Ovary (tissue), 10 donors: ENCODE measurements at regions of chrX and their contacts with region 1.

Region 1: DNA sequence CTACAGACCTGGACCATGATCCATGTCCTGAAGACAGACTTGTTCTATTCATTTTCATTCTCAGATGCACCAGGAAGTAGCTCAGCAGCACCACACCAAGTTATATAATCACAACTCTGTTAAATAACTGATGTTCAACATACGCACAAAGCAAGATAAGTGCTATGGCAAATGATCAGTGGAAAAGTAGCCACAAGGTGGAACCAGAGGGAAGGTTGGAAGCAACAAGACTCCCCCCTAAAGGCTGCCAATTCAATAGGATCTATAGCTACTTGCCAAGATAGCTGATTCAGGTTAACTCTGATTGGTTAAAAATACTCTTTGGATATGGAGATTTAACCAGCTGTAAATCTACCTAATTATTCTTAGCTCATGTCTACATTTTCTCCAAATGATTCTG is 23.7 kb upstream of the FAM47B start:
- DNase-seq: no peak
- H3K4me3 ChIP-seq: no peak overlapping the region
- H3K27ac ChIP-seq: no peak overlapping the region
- H3K4me1 ChIP-seq: no peaks in the 10 kb centered on the region
- H3K27me3 ChIP-seq: no peaks in the 10 kb centered on the region
- CTCF ChIP-seq: no peak
- EP300 ChIP-seq: no peak
- POLR2A ChIP-seq: no peak

Region 2: DNA sequence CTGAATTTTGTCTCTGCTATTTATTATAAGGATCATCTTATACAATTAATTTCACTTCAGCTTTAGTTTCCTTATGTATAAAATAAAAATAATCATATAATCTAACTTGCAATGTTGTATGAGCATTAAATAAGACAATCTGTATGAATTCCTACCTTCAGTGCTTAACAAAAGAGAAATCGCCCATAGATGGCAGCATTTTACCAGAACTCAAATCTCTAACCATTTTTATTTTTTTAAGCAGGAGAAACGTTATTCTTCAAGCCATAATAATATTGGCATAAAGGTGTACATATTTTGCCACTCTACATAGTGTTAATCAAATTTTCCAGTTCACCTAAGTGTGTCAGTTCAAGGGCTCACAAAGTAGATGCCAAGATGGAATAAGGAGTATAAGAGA is 340.6 kb before region 1 on chrX:
- intact Hi-C with region 1: loop called in 1 of 4 experiments (anchors 5 kb)
- DNase-seq: no peak
- H3K4me3 ChIP-seq: no peak overlapping the region
- H3K27ac ChIP-seq: no peak overlapping the region
- H3K4me1 ChIP-seq: no peaks in the 10 kb centered on the region
- H3K27me3 ChIP-seq: no peaks in the 10 kb centered on the region
- CTCF ChIP-seq: no peak
- EP300 ChIP-seq: no peak
- POLR2A ChIP-seq: no peak

Region 3: DNA sequence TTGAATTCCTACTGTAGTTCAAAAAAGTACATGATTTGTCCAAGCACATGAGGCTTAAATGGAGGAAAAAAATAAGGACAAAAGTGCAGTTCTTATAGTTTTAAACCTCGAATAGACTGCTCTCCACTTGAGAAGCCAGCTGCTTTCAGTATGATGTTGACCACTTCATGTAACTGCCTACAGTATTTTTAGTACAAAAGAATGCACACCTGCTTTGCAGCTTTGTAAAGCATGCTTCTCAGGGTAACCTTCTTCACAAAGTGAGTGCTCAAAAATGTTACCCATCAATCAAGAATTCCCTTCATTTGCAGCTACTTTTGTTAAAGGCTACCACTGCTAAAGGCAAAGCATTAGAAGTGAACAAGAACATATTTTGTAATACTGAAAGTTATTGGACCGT is 59.7 kb before region 1 on chrX:
- intact Hi-C with region 1: no loop called
- DNase-seq: no peak
- H3K4me3 ChIP-seq: no peak overlapping the region
- H3K27ac ChIP-seq: no peak overlapping the region
- H3K4me1 ChIP-seq: no peaks in the 10 kb centered on the region
- H3K27me3 ChIP-seq: no peaks in the 10 kb centered on the region
- CTCF ChIP-seq: no peak
- EP300 ChIP-seq: no peak
- POLR2A ChIP-seq: no peak